GM12878 (cell line): ENCODE measurements at regions of chr5 and their contacts with region 1.

Region 1: GRCh38 chr5:148831590-148832565 is 5.5 kb downstream of the ADRB2 start:
- DNase-seq: peak; percentile 59
- ATAC-seq: peak; percentile 92
- H3K4me3 ChIP-seq: 0 out of 2 replicates have a peak overlapping the region, but pooled peaks have one; percentile 28
- H3K27ac ChIP-seq: peak overlapping the region; percentile 40
- H3K4me1 ChIP-seq: peaks cover 31% of the 10 kb centered on the region
- H3K27me3 ChIP-seq: no peaks in the 10 kb centered on the region; a peak in 1 of 4 replicates
- CTCF ChIP-seq: no peak
- EP300 ChIP-seq: peak in 1 of 2 experiments; percentile 76; a peak in 2 of 4 replicates
- POLR2A ChIP-seq: no peak
- RAD21 ChIP-seq: no peak

Region 2: DNA sequence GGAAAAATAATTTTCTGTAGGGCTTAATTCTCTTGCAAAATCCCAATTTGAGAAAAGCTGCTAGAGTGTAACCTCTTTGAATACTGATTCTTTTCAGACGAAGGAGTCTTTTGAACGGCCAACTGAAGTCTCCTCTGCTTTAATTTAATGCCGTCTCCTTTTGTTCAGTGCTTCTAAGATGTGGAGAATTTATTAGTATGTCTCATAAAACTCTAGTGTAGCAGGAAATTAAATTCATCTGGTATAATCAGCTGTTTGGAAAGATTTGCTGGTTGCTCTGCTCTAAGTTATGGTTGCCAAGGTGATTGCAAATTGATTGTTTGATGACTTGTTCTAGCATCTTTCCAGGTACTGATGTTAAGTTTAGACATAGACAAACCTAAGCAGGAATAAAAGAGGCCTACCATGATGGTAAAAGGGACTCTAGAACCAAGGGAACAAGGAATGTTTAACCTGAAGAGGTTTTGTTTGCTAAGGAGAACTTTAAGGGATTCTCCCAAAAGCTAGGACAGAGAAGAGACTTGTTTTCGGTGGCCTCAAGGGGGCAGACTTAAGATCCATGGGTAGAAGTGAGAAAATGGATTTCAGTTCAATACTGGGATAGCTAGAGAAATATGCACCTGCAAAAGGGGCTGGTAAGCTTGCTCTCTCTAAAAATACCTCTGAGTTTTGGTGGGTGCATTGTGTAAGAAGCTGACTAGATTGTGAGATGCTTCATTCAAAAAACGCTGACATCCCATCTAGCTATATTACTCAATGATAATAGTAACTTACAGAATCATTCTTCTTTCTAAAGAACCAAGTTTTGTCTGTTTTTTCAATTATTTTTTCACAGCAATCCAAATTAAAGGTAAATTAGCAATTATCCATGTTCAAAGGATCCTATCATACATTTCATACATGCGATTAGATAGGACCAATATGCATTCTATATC is 11.2 kb before region 1 on chr5:
- CTCF ChIA-PET with region 1: interaction called, 37 read pairs
- POLR2A ChIA-PET with region 1: no interaction called
- RAD21 ChIA-PET with region 1: interaction called, 7 read pairs
- SMC1A ChIA-PET with region 1: interaction called, 9 read pairs
- in situ Hi-C with region 1: no loop called
- intact Hi-C with region 1: no loop called
- DNase-seq: no peak
- ATAC-seq: peak; percentile 76
- H3K4me3 ChIP-seq: no peak overlapping the region
- H3K27ac ChIP-seq: no peak overlapping the region
- H3K4me1 ChIP-seq: peaks cover 5% of the 10 kb centered on the region
- H3K27me3 ChIP-seq: no peaks in the 10 kb centered on the region
- CTCF ChIP-seq: peak; percentile 49 to 59 (median 59); a peak in 5 of 6 replicates
- EP300 ChIP-seq: no peak
- POLR2A ChIP-seq: no peak
- RAD21 ChIP-seq: peak; percentile 41

Region 3: DNA sequence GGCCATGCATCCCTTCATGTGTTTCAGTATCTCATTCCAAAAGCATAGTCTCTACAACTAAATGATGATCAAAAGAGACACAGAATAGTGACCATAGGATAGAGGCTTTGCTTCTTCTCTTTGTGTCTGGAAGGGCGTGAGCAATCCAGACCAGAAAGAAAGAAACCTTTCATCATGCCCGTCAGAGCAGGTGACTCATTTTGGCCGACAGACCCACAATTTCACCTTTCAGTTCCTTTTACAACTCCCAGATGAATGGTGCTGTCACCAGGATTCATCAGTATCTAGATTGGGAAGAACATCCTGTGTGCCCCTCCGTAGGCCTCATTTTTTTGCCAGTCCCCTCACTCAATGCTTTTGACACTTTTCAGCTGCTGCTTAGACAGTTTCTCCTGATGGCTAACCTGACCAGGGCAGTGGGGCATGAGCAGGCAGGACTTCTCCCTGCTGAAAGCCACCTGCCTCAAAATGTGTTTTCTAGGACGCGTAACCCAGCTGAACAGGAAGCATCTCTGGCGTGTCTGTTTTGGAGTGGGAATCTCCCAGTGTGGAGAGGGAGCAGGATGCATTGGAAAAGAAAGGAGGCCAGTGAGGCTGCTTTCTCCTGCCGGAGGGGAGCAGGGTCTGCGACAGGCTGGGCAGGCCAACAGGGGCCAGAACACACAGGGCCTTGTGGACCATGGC is 330.7 kb after region 1 on chr5:
- CTCF ChIA-PET with region 1: no interaction called
- POLR2A ChIA-PET with region 1: no interaction called
- RAD21 ChIA-PET with region 1: no interaction called
- SMC1A ChIA-PET with region 1: no interaction called
- in situ Hi-C with region 1: no loop called
- intact Hi-C with region 1: no loop called
- DNase-seq: peak; percentile 11
- ATAC-seq: peak; percentile 91
- H3K4me3 ChIP-seq: no peak overlapping the region
- H3K27ac ChIP-seq: no peak overlapping the region
- H3K4me1 ChIP-seq: peaks cover 6% of the 10 kb centered on the region
- H3K27me3 ChIP-seq: no peaks in the 10 kb centered on the region; a peak in 2 of 4 replicates
- CTCF ChIP-seq: no peak
- EP300 ChIP-seq: no peak
- POLR2A ChIP-seq: no peak
- RAD21 ChIP-seq: no peak